ENCODE measurements at regions of chr20 and their contacts with region 1.

Region 1: GRCh38 chr20:44582311-44583025 is at the start of gene PKIG:
- DNase-seq: no peak
- ATAC-seq: peak; percentile 8
- H3K4me3 ChIP-seq: peak within 1 kb of the TSS; percentile 29
- H3K27ac ChIP-seq: peak within 1 kb of the TSS; percentile 77
- H3K4me1 ChIP-seq: peaks cover 80% of the 10 kb centered on the region
- H3K27me3 ChIP-seq: no peaks in the 10 kb centered on the region
- CTCF ChIP-seq: no peak
- EP300 ChIP-seq: 0 out of 4 replicates have a peak, but pooled peaks of 1 of the 2 experiments have one; percentile 6
- POLR2A ChIP-seq: no peak
- RAD21 ChIP-seq: no peak
- polyA plus RNA-seq, gene PKIG: 5.7 to 17.5 TPM

Region 2: GRCh38 chr20:44056010-44056698 is 526.3 kb before region 1 on chr20:
- CTCF ChIA-PET with region 1: no interaction called
- POLR2A ChIA-PET with region 1: no interaction called
- RAD21 ChIA-PET with region 1: no interaction called
- SMC1A ChIA-PET with region 1: no interaction called
- in situ Hi-C with region 1: no loop called
- intact Hi-C with region 1: no loop called
- DNase-seq: no peak
- ATAC-seq: peak; percentile 93
- H3K4me3 ChIP-seq: no peak overlapping the region
- H3K27ac ChIP-seq: no peak overlapping the region
- H3K4me1 ChIP-seq: no peaks in the 10 kb centered on the region
- H3K27me3 ChIP-seq: no peaks in the 10 kb centered on the region
- CTCF ChIP-seq: peak; percentile 38 to 53 (median 47); a peak in 4 of 6 replicates
- EP300 ChIP-seq: no peak
- POLR2A ChIP-seq: no peak
- RAD21 ChIP-seq: peak; percentile 72

Region 3: DNA sequence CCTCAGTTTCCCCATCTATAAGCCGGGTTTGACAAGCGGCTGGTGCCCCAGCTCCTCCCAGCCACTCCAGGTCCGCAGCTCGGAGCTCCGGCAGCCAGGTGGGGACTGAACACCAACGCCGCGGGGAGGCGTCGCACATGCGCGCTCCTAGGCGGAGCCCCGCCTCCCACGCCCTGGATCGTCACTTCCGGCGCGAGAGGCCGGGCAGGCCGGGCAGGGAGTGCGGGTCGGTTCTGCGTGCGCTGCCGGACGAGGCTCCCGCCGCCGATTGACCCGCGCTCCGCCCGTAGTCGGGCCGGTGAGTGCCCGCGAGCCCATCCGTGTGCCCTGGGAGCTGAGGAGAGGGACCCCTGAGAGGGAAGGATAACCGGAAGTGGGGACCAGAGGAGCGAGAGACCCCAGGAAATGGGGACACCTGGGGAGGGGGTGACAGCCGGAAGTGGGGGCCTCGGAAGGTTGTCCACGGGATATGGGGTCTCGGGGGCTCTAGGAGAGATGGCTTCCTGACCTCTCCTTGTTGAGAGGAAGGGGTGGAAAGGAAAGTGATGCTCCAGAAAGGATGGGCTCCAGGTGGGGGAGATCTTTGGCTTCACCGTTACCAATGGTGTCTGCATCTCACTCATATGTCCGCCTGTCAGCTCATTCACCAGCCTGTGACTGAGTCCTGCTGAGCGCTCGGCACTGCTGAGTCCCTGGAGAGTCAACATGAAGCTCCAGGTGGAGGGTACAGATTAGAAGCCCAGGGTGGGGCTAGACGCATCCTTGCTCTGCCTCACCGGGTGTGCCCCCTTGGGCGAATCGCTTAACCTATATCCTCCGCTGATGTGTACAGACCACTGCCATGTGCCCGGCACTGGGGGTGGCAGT is 106.5 kb before region 1 on chr20 and contains the start of gene TTPAL:
- CTCF ChIA-PET with region 1: no interaction called
- POLR2A ChIA-PET with region 1: no interaction called
- RAD21 ChIA-PET with region 1: interaction called, 3 read pairs
- SMC1A ChIA-PET with region 1: interaction called, 3 read pairs
- in situ Hi-C with region 1: no loop called
- intact Hi-C with region 1: loop called (anchors 5 kb)
- DNase-seq: peak; percentile 68
- ATAC-seq: peak; percentile 97
- H3K4me3 ChIP-seq: peak within 1 kb of the TSS; percentile 75
- H3K27ac ChIP-seq: peak within 1 kb of the TSS; percentile 90
- H3K4me1 ChIP-seq: no peaks in the 10 kb centered on the region; the same call in 1 of the 2 replicates
- H3K27me3 ChIP-seq: no peaks in the 10 kb centered on the region
- CTCF ChIP-seq: peak; percentile 11 to 60 (median 17); a peak in 3 of 6 replicates
- EP300 ChIP-seq: no peak
- POLR2A ChIP-seq: peak; percentile 100
- RAD21 ChIP-seq: peak; percentile 32; the same call in 1 of the 2 replicates
- polyA plus RNA-seq, gene TTPAL: 4.0 to 4.3 TPM

Region 4: DNA sequence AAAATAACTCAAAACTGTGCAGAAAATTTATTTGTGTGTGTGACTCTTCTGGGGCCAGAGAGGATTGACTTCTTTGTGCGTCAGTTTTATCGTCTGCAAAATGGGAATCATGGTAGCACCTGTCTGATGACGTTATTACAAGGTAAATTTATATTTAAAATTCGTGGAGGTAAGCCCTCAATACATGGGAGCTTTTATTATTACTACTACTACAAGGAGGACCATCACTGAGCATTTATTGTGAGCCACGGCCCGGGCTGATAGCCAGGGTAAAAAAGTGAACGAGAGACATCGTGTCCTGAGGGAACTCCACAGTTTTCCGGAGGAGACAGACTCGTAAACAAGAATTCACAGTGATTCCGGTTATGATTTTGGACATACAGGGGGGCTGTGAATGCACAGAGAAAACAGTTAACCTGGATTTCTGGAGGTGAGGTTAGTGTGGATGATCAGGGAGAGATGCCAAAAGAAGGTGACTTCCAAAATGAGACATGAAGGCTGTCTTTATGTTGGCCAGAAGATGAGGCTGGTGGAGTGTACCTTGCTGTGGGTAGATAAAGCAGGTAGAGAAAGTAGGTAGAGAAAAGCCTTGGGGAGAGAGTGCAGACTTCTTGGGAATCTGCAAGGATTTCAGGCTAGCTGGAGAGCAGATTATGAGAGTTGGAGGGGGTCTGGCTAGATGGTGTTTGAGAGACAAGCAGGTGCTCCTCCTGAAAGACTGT is 50.0 kb before region 1 on chr20:
- CTCF ChIA-PET with region 1: interaction called, 4 read pairs
- POLR2A ChIA-PET with region 1: no interaction called
- RAD21 ChIA-PET with region 1: interaction called, 4 read pairs
- SMC1A ChIA-PET with region 1: interaction called, 8 read pairs
- in situ Hi-C with region 1: no loop called
- intact Hi-C with region 1: loop called (anchors 5 kb)
- DNase-seq: no peak
- ATAC-seq: no peak; the same call in 1 of the 3 replicates
- H3K4me3 ChIP-seq: peak overlapping the region; percentile 63
- H3K27ac ChIP-seq: no peak overlapping the region
- H3K4me1 ChIP-seq: no peaks in the 10 kb centered on the region; the same call in 1 of the 2 replicates
- H3K27me3 ChIP-seq: no peaks in the 10 kb centered on the region
- CTCF ChIP-seq: no peak
- EP300 ChIP-seq: no peak
- POLR2A ChIP-seq: no peak
- RAD21 ChIP-seq: 0 out of 2 replicates have a peak, but pooled peaks have one; percentile 7

Region 5: GRCh38 chr20:44598423-44599305 is 16.2 kb after region 1 on chr20:
- CTCF ChIA-PET with region 1: interaction called, 141 read pairs
- POLR2A ChIA-PET with region 1: interaction called, 46 read pairs
- RAD21 ChIA-PET with region 1: interaction called, 61 read pairs
- SMC1A ChIA-PET with region 1: interaction called, 144 read pairs
- in situ Hi-C with region 1: no loop called
- intact Hi-C with region 1: no loop called
- DNase-seq: no peak
- ATAC-seq: peak; percentile 75
- H3K4me3 ChIP-seq: peak overlapping the region; percentile 28; the same call in 1 of the 2 replicates
- H3K27ac ChIP-seq: peak overlapping the region; percentile 0
- H3K4me1 ChIP-seq: peaks cover 25% of the 10 kb centered on the region
- H3K27me3 ChIP-seq: no peaks in the 10 kb centered on the region
- CTCF ChIP-seq: peak; percentile 12 to 25 (median 17); a peak in 3 of 6 replicates
- EP300 ChIP-seq: no peak
- POLR2A ChIP-seq: peak; percentile 58
- RAD21 ChIP-seq: peak; percentile 46; the same call in 1 of the 2 replicates

Region 6: GRCh38 chr20:44642203-44643153 is 60.0 kb after region 1 on chr20:
- CTCF ChIA-PET with region 1: interaction called, 12 read pairs
- POLR2A ChIA-PET with region 1: interaction called, 32 read pairs
- RAD21 ChIA-PET with region 1: interaction called, 26 read pairs
- SMC1A ChIA-PET with region 1: interaction called, 25 read pairs
- in situ Hi-C with region 1: no loop called
- intact Hi-C with region 1: loop called (anchors 2 kb)
- DNase-seq: peak; percentile 77
- ATAC-seq: peak; percentile 65
- H3K4me3 ChIP-seq: peak overlapping the region; percentile 16; the same call in 1 of the 2 replicates
- H3K27ac ChIP-seq: peak overlapping the region; percentile 99
- H3K4me1 ChIP-seq: peaks cover 68% of the 10 kb centered on the region
- H3K27me3 ChIP-seq: no peaks in the 10 kb centered on the region
- CTCF ChIP-seq: peak; percentile 18 to 42 (median 22); a peak in 5 of 6 replicates
- EP300 ChIP-seq: peak in 1 of 2 experiments; percentile 17; a peak in 1 of 4 replicates
- POLR2A ChIP-seq: peak; percentile 51; the same call in 1 of the 2 replicates
- RAD21 ChIP-seq: 0 out of 2 replicates have a peak, but pooled peaks have one; percentile 17

Region 7: DNA sequence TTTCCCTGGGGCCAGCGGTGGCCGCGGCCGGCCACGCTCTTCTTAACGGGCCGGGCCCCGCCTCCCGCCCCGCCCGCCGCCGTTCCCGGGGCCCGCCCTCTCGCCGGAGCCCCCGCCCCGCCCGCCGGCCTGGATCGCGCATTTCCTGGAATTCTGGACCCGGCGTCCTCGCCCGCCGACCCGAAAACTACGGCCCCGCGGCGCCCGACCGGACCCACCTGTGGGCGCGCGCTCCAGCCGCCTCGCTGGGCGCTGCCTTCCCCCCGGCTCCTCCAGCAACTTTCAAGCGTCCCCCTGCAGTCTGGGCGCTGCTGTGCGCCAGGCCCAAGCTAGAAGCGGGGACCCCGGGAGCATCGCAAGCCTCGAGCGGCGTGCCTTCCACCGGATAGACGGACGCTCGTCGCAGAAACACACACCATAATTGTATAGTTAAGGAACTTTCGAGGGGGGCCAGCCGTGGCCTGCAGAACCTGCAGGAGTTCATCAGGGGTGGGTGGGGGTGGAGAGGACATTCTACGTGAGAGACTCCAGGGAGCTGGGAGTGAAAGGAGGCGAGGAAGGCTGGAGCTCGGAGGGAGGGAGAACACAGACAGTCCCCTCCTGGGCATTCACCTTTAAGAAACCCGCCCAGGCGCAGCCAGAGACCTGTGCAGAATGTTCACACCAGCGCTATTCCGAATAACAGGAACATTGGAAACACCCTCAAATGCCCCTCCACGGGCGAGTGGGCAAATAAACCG is 69.4 kb after region 1 on chr20 and contains the start of gene ADA:
- CTCF ChIA-PET with region 1: interaction called, 10 read pairs
- POLR2A ChIA-PET with region 1: interaction called, 32 read pairs
- RAD21 ChIA-PET with region 1: interaction called, 26 read pairs
- SMC1A ChIA-PET with region 1: interaction called, 25 read pairs
- in situ Hi-C with region 1: no loop called
- intact Hi-C with region 1: loop called (anchors 2 kb)
- DNase-seq: no peak
- ATAC-seq: peak; percentile 66
- H3K4me3 ChIP-seq: peak within 1 kb of the TSS; percentile 95
- H3K27ac ChIP-seq: peak within 1 kb of the TSS; percentile 84
- H3K4me1 ChIP-seq: peaks cover 39% of the 10 kb centered on the region
- H3K27me3 ChIP-seq: no peaks in the 10 kb centered on the region
- CTCF ChIP-seq: peak in 1 of 3 experiments; percentile 16; a peak in 1 of 6 replicates
- EP300 ChIP-seq: no peak
- POLR2A ChIP-seq: peak; percentile 50; the same call in 1 of the 2 replicates
- RAD21 ChIP-seq: no peak
- polyA plus RNA-seq, gene ADA: 40.9 to 70.6 TPM

Measured in GM12878 (cell line).